CD8-positive, alpha-beta T cell (primary cell): ENCODE measurements at regions of chr1 and their contacts with region 1.

Region 1: GRCh38 chr1:42816585-42817434 is at the starts of genes ERMAP and SVBP:
- DNase-seq: peak; percentile 85 to 98 (median 95)
- ATAC-seq: peak; percentile 91
- H3K4me3 ChIP-seq: peak within 1 kb of the TSS; percentile 63 to 88
- H3K4me3 Mint-ChIP-seq: peak within 1 kb of the TSS; percentile 80
- H3K27ac ChIP-seq: peak within 1 kb of the TSS; percentile 69 to 89
- H3K27ac Mint-ChIP-seq: peak within 1 kb of the TSS; percentile 85
- H3K4me1 ChIP-seq: peaks cover 16% of the 10 kb centered on the region
- H3K4me1 Mint-ChIP-seq: peaks cover 27% of the 10 kb centered on the region
- H3K27me3 ChIP-seq: no peaks in the 10 kb centered on the region
- H3K27me3 Mint-ChIP-seq: no peaks in the 10 kb centered on the region
- CTCF ChIP-seq: no peak
- total RNA-seq, gene ERMAP: 3.0 to 3.3 TPM
- total RNA-seq, gene SVBP: 17.6 to 18.3 TPM

Region 2: DNA sequence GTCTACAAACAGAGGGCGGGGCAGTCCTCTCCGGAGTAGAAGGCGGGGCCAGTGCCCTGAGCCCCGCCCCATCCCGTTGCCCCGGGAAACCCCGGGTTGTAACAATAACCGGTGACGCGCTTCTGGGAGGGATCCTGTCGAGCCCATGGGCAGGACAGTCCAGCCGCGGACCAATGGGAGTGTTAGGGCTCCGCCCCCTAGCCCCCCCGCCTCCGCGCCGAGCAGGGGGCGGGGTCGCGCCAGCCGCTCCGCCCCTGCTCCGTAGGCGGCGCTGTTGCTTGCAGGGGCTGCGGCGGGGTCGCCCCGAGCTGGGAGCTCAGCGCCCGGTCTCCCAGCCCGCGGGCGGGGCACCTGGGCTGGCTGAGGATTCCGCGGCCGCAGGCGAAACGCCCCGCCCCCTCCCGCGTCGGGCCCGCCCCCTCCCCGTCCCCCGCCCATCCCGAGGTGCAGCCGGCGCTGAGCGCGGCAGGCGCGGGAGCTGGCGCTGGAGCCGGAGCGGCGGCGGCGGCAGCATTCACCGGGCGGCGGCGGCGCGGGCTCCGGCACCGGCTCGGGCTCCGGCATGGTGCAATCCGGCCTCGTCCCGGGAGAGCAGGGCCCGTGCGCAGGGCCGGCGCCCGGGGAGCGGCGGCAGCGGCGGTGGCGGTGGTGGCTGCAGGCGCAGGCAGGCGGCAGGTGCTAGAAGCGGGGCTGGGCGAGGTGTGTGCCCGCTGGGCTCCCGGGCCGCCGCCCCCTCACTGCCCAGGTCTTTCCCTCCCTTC is 1455.6 kb before region 1 on chr1 and contains the start of gene FOXO6:
- CTCF ChIA-PET with region 1: no interaction called
- POLR2A ChIA-PET with region 1: no interaction called
- intact Hi-C with region 1: loop called in 1 of 2 experiments (anchors 10 kb)
- DNase-seq: peak; percentile 85 to 97 (median 94)
- ATAC-seq: peak; percentile 90
- H3K4me3 ChIP-seq: peak within 1 kb of the TSS; percentile 35 to 52
- H3K4me3 Mint-ChIP-seq: peak within 1 kb of the TSS; percentile 82
- H3K27ac ChIP-seq: peak within 1 kb of the TSS; percentile 14 to 25
- H3K27ac Mint-ChIP-seq: peak within 1 kb of the TSS; percentile 28
- H3K4me1 ChIP-seq: peaks cover 22% of the 10 kb centered on the region
- H3K4me1 Mint-ChIP-seq: peaks cover 23% of the 10 kb centered on the region
- H3K27me3 ChIP-seq: peaks cover 10 to 11% of the 10 kb centered on the region in 2 experiments
- H3K27me3 Mint-ChIP-seq: peaks cover 29% of the 10 kb centered on the region
- CTCF ChIP-seq: no peak
- total RNA-seq, gene FOXO6: 1.4 to 1.7 TPM

Region 3: GRCh38 chr1:42456010-42456758 is 360.6 kb before region 1 on chr1 and contains the starts of genes PPCS and ZMYND12:
- CTCF ChIA-PET with region 1: no interaction called
- POLR2A ChIA-PET with region 1: no interaction called
- intact Hi-C with region 1: loop called in 1 of 2 experiments (anchors 5 kb)
- DNase-seq: peak; percentile 82 to 98 (median 91)
- ATAC-seq: peak; percentile 92
- H3K4me3 ChIP-seq: peak within 1 kb of the TSS; percentile 99
- H3K4me3 Mint-ChIP-seq: peak within 1 kb of the TSS; percentile 98
- H3K27ac ChIP-seq: peak within 1 kb of the TSS; percentile 99 to 100
- H3K27ac Mint-ChIP-seq: peak within 1 kb of the TSS; percentile 100
- H3K4me1 ChIP-seq: peaks cover 25% of the 10 kb centered on the region
- H3K4me1 Mint-ChIP-seq: peaks cover 37% of the 10 kb centered on the region
- H3K27me3 ChIP-seq: no peaks in the 10 kb centered on the region
- H3K27me3 Mint-ChIP-seq: no peaks in the 10 kb centered on the region
- CTCF ChIP-seq: peak; percentile 34
- total RNA-seq, gene PPCS: 38.0 to 38.1 TPM
- total RNA-seq, gene ZMYND12: 0.56 to 0.76 TPM

Region 4: GRCh38 chr1:42657971-42658879 is 158.6 kb before region 1 on chr1 and contains the start of gene PPIH:
- CTCF ChIA-PET with region 1: no interaction called
- POLR2A ChIA-PET with region 1: no interaction called
- intact Hi-C with region 1: loop called in 1 of 2 experiments (anchors 1 kb)
- DNase-seq: peak; percentile 87 to 97 (median 95)
- ATAC-seq: peak; percentile 98
- H3K4me3 ChIP-seq: peak within 1 kb of the TSS; percentile 78 to 90
- H3K4me3 Mint-ChIP-seq: peak within 1 kb of the TSS; percentile 99
- H3K27ac ChIP-seq: peak within 1 kb of the TSS; percentile 54 to 81
- H3K27ac Mint-ChIP-seq: peak within 1 kb of the TSS; percentile 87
- H3K4me1 ChIP-seq: peaks cover 24% of the 10 kb centered on the region
- H3K4me1 Mint-ChIP-seq: peaks cover 45% of the 10 kb centered on the region
- H3K27me3 ChIP-seq: no peaks in the 10 kb centered on the region
- H3K27me3 Mint-ChIP-seq: no peaks in the 10 kb centered on the region
- CTCF ChIP-seq: no peak
- total RNA-seq, gene PPIH: 31.0 to 33.2 TPM

Region 5: GRCh38 chr1:42681741-42682483 is 134.9 kb before region 1 on chr1 and contains the start of gene YBX1:
- CTCF ChIA-PET with region 1: no interaction called
- POLR2A ChIA-PET with region 1: interaction called, 3 read pairs
- intact Hi-C with region 1: loop called (anchors 1 to 5 kb)
- DNase-seq: peak; percentile 88 to 98 (median 95)
- ATAC-seq: peak; percentile 89
- H3K4me3 ChIP-seq: peak within 1 kb of the TSS; percentile 81 to 84
- H3K4me3 Mint-ChIP-seq: peak within 1 kb of the TSS; percentile 99
- H3K27ac ChIP-seq: peak within 1 kb of the TSS; percentile 82 to 88
- H3K27ac Mint-ChIP-seq: peak within 1 kb of the TSS; percentile 97
- H3K4me1 ChIP-seq: peaks cover 43% of the 10 kb centered on the region
- H3K4me1 Mint-ChIP-seq: peaks cover 58% of the 10 kb centered on the region
- H3K27me3 ChIP-seq: no peaks in the 10 kb centered on the region
- H3K27me3 Mint-ChIP-seq: no peaks in the 10 kb centered on the region
- CTCF ChIP-seq: no peak
- total RNA-seq, gene YBX1: 440 to 450 TPM

Region 6: DNA sequence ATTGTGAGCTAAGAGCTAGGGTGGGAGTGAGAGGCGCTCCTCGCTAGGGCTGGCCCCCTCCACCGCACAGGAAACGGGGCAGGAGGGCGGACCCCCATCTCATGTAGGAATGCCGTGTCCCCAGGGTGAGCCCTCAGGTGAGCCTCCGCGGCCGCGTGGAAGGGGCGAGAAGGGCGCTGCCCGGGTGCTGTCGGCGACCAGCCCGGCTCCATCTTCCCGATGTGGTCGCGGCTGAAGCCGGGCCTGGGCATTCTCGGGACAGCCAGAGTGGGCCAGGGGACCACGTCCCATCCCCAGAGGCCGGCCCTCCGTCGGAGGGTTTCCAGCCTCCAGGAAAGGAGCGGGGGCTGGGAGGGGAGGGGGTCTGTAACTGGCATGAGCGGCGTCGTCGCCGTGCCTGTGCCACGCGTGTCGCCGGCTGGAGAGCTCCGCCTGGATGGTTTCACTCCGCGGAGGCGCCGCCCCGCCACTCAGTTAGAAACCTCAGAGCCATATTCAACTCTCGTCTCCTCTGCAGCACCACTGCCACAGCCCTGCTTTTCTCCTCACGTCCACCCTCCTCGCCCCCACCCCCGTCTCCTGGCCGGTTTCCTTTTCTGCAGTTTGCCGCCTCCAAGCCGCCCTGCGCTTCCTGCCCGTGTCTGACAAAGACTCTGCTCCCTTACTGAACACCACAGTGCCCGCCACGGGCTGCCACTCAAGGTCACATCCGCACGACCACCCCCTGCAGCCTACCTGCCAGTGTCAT is 31.7 kb before region 1 on chr1 and contains the start of gene TMEM269:
- CTCF ChIA-PET with region 1: interaction called, 3 read pairs
- POLR2A ChIA-PET with region 1: no interaction called
- intact Hi-C with region 1: loop called in 1 of 2 experiments (anchors 2 kb)
- DNase-seq: peak; percentile 4 to 73 (median 51)
- ATAC-seq: peak; percentile 88
- H3K4me3 ChIP-seq: peak within 1 kb of the TSS; percentile 53 to 61
- H3K4me3 Mint-ChIP-seq: peak within 1 kb of the TSS; percentile 84
- H3K27ac ChIP-seq: peak within 1 kb of the TSS in 1 of 2 experiments; percentile 10
- H3K27ac Mint-ChIP-seq: peak within 1 kb of the TSS; percentile 65
- H3K4me1 ChIP-seq: peaks cover 16% of the 10 kb centered on the region
- H3K4me1 Mint-ChIP-seq: peaks cover 22% of the 10 kb centered on the region
- H3K27me3 ChIP-seq: no peaks in the 10 kb centered on the region
- H3K27me3 Mint-ChIP-seq: no peaks in the 10 kb centered on the region
- CTCF ChIP-seq: no peak
- total RNA-seq, gene TMEM269: 0.44 to 0.57 TPM

Region 7: DNA sequence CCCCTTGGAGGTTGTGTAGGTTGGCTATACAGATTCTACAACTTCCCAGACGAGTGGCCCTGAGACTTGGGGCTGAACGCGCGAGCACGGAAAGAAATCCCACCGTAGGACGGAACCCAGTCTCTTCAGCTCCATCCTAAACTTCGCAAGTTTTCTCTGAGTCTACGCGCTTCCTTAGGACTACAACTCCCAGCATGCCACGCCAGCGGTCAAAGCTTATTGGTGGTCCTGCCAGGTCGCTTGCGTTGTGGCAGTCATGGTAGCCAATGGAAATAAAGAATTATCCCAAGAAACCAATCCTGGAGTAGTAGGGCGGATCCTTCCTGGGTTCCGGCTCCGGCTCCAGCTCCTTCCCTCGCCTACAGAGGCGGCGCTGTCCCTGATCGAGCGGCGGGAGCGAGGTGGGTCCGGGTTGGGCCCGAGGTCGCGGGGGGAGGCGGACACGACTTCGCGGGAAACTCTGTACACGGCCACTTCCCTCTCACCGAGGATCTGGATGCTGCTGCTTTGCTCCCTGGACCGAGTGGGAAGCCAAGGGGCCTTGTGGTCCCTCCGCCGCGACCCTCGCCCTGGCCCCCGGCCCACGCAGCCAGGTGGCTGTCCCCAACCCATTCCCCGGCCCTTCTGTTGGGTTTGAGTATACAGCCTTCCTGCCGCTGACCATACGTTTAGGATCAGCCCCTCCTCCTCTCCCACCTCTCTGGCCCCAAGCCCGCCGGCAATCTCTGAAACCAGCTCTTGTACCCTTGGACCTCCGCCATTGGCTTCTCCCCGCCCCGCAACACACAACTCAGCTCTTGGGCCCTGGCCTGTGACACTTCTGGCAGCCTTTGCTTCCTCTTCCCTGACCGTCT is 29.7 kb after region 1 on chr1 and contains the start of gene ZNF691:
- CTCF ChIA-PET with region 1: no interaction called
- POLR2A ChIA-PET with region 1: interaction called, 9 read pairs
- intact Hi-C with region 1: loop called (anchors 1 kb)
- DNase-seq: peak; percentile 71 to 96 (median 87)
- ATAC-seq: peak; percentile 97
- H3K4me3 ChIP-seq: peak within 1 kb of the TSS; percentile 74 to 96
- H3K4me3 Mint-ChIP-seq: peak within 1 kb of the TSS; percentile 92
- H3K27ac ChIP-seq: peak within 1 kb of the TSS; percentile 46 to 72
- H3K27ac Mint-ChIP-seq: peak within 1 kb of the TSS; percentile 88
- H3K4me1 ChIP-seq: peaks cover 23% of the 10 kb centered on the region
- H3K4me1 Mint-ChIP-seq: peaks cover 38% of the 10 kb centered on the region
- H3K27me3 ChIP-seq: no peaks in the 10 kb centered on the region
- H3K27me3 Mint-ChIP-seq: no peaks in the 10 kb centered on the region
- CTCF ChIP-seq: no peak
- total RNA-seq, gene ZNF691: 1.1 to 1.3 TPM

Region 8: GRCh38 chr1:42860339-42861013 is 43.7 kb after region 1 on chr1:
- CTCF ChIA-PET with region 1: no interaction called
- POLR2A ChIA-PET with region 1: no interaction called
- intact Hi-C with region 1: no loop called
- DNase-seq: no peak
- ATAC-seq: no peak
- H3K4me3 ChIP-seq: no peak overlapping the region
- H3K4me3 Mint-ChIP-seq: no peak overlapping the region
- H3K27ac ChIP-seq: no peak overlapping the region
- H3K27ac Mint-ChIP-seq: no peak overlapping the region
- H3K4me1 ChIP-seq: no peaks in the 10 kb centered on the region
- H3K4me1 Mint-ChIP-seq: no peaks in the 10 kb centered on the region
- H3K27me3 ChIP-seq: peaks cover 0 to 7% of the 10 kb centered on the region in 2 experiments
- H3K27me3 Mint-ChIP-seq: peaks cover 33% of the 10 kb centered on the region
- CTCF ChIP-seq: no peak